Calu3 (cell line): ENCODE measurements at regions of chr15 and their contacts with region 1.

Region 1: GRCh38 chr15:64596701-64597476 is 136.5 kb downstream of the ZNF609 start:
- DNase-seq: no peak
- H3K4me3 Mint-ChIP-seq: no peak overlapping the region
- H3K27ac Mint-ChIP-seq: no peak overlapping the region
- H3K4me1 Mint-ChIP-seq: peaks cover 17% of the 10 kb centered on the region
- H3K27me3 Mint-ChIP-seq: no peaks in the 10 kb centered on the region
- CTCF ChIP-seq: no peak

Region 2: GRCh38 chr15:64536244-64536836 is 60.5 kb before region 1 on chr15:
- CTCF ChIA-PET with region 1: interaction called, 11 read pairs
- intact Hi-C with region 1: no loop called
- DNase-seq: peak; percentile 19
- H3K4me3 Mint-ChIP-seq: no peak overlapping the region
- H3K27ac Mint-ChIP-seq: peak overlapping the region; percentile 65
- H3K4me1 Mint-ChIP-seq: peaks cover 15% of the 10 kb centered on the region
- H3K27me3 Mint-ChIP-seq: no peaks in the 10 kb centered on the region
- CTCF ChIP-seq: no peak